ENCODE measurements at regions of chr1 and their contacts with region 1.

Region 1: GRCh38 chr1:98053471-98054366 is 132.9 kb upstream of the DPYD start:
- DNase-seq: peak; percentile 73
- ATAC-seq: peak; percentile 90
- H3K4me3 Mint-ChIP-seq: peak overlapping the region; percentile 55
- H3K27ac Mint-ChIP-seq: no peak overlapping the region
- H3K4me1 Mint-ChIP-seq: peaks cover 21% of the 10 kb centered on the region
- H3K27me3 Mint-ChIP-seq: peaks cover 57% of the 10 kb centered on the region

Region 2: GRCh38 chr1:96236156-96236739 is 1817.5 kb before region 1 on chr1:
- CTCF ChIA-PET with region 1: no interaction called
- POLR2A ChIA-PET with region 1: no interaction called
- intact Hi-C with region 1: loop called in 1 of 2 experiments (anchors 2 kb)
- DNase-seq: peak; percentile 20
- ATAC-seq: no peak
- H3K4me3 Mint-ChIP-seq: no peak overlapping the region
- H3K27ac Mint-ChIP-seq: no peak overlapping the region
- H3K4me1 Mint-ChIP-seq: no peaks in the 10 kb centered on the region
- H3K27me3 Mint-ChIP-seq: no peaks in the 10 kb centered on the region

Region 3: DNA sequence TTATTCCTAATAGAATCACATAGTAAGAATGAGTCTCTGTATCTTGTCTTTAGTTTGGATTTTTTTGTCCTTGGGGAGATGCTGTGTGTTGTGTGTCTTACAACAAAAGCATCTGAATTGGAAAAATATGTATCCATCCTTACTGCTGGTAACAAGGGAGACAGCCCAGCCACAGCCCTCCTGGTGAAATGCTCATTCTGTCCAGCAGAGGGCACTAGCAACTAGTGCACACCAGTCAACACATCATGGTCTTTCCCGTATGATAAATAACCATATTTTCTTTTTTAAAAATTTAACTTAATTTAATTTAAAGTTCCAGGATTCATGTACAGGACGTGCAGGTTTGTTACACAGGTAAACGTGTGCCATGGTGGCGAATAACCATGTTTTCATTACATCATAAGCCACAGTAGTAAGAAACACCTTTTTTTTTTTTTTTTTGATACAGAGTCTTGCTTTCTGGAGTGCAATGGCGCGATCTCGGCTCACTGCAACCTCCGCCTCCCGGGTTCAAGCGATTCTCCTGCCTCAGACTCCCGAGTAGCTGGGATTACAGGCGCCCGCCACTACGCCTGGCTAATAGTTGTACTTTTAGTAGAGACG is 1087.1 kb before region 1 on chr1:
- CTCF ChIA-PET with region 1: interaction called, 11 read pairs
- POLR2A ChIA-PET with region 1: no interaction called
- intact Hi-C with region 1: loop called (anchors 1 kb)
- DNase-seq: peak; percentile 83
- ATAC-seq: peak; percentile 68
- H3K4me3 Mint-ChIP-seq: no peak overlapping the region
- H3K27ac Mint-ChIP-seq: no peak overlapping the region
- H3K4me1 Mint-ChIP-seq: no peaks in the 10 kb centered on the region
- H3K27me3 Mint-ChIP-seq: peaks cover 19% of the 10 kb centered on the region

Region 4: GRCh38 chr1:97186404-97186803 is 867.3 kb before region 1 on chr1:
- CTCF ChIA-PET with region 1: no interaction called
- POLR2A ChIA-PET with region 1: no interaction called
- intact Hi-C with region 1: loop called (anchors 1 to 5 kb)
- DNase-seq: peak; percentile 20
- ATAC-seq: no peak
- H3K4me3 Mint-ChIP-seq: no peak overlapping the region
- H3K27ac Mint-ChIP-seq: no peak overlapping the region
- H3K4me1 Mint-ChIP-seq: no peaks in the 10 kb centered on the region
- H3K27me3 Mint-ChIP-seq: no peaks in the 10 kb centered on the region

Region 5: DNA sequence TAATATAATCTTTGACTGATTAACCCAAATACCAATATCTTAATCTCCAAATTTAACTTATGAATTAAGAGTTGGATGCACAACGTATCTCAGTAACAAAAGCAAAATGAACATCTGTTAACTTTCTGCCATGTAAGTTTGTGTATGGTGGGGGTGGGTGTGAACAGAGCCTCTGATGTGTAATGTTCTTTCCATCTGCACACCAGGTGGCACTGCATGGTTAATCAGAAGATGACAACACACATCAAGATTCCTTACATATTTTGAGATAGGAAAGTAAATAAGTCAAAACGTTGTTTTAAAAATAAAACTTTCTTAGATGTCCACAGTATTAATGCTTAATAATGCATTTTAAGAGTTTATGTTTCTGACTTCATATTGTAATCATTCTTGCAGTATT is 384.8 kb before region 1 on chr1:
- CTCF ChIA-PET with region 1: no interaction called
- POLR2A ChIA-PET with region 1: no interaction called
- intact Hi-C with region 1: loop called (anchors 2 to 5 kb)
- DNase-seq: peak; percentile 26
- ATAC-seq: no peak
- H3K4me3 Mint-ChIP-seq: no peak overlapping the region
- H3K27ac Mint-ChIP-seq: no peak overlapping the region
- H3K4me1 Mint-ChIP-seq: no peaks in the 10 kb centered on the region
- H3K27me3 Mint-ChIP-seq: no peaks in the 10 kb centered on the region

Region 6: GRCh38 chr1:97820470-97821188 is 233.1 kb before region 1 on chr1:
- CTCF ChIA-PET with region 1: interaction called, 5 read pairs
- POLR2A ChIA-PET with region 1: no interaction called
- intact Hi-C with region 1: loop called (anchors 2 to 5 kb)
- DNase-seq: no peak
- ATAC-seq: peak; percentile 39
- H3K4me3 Mint-ChIP-seq: no peak overlapping the region
- H3K27ac Mint-ChIP-seq: no peak overlapping the region
- H3K4me1 Mint-ChIP-seq: no peaks in the 10 kb centered on the region
- H3K27me3 Mint-ChIP-seq: no peaks in the 10 kb centered on the region

Region 7: GRCh38 chr1:98468111-98468717 is 414.5 kb after region 1 on chr1:
- CTCF ChIA-PET with region 1: no interaction called
- POLR2A ChIA-PET with region 1: no interaction called
- intact Hi-C with region 1: loop called in 1 of 2 experiments (anchors 5 kb)
- DNase-seq: no peak
- ATAC-seq: no peak
- H3K4me3 Mint-ChIP-seq: no peak overlapping the region
- H3K27ac Mint-ChIP-seq: no peak overlapping the region
- H3K4me1 Mint-ChIP-seq: no peaks in the 10 kb centered on the region
- H3K27me3 Mint-ChIP-seq: no peaks in the 10 kb centered on the region